ENCODE measurements at regions of chr6 and their contacts with region 1.

Region 1: GRCh38 chr6:2103644-2104523 is 141.5 kb downstream of the GMDS start:
- DNase-seq: peak; percentile 11
- ATAC-seq: peak; percentile 84
- H3K4me3 ChIP-seq: no peak overlapping the region
- H3K27ac ChIP-seq: no peak overlapping the region
- H3K4me1 ChIP-seq: no peaks in the 10 kb centered on the region
- H3K27me3 ChIP-seq: no peaks in the 10 kb centered on the region
- CTCF ChIP-seq: peak; percentile 43 to 76 (median 56); a peak in 5 of 6 replicates
- EP300 ChIP-seq: no peak
- POLR2A ChIP-seq: no peak
- RAD21 ChIP-seq: peak; percentile 94

Region 2: DNA sequence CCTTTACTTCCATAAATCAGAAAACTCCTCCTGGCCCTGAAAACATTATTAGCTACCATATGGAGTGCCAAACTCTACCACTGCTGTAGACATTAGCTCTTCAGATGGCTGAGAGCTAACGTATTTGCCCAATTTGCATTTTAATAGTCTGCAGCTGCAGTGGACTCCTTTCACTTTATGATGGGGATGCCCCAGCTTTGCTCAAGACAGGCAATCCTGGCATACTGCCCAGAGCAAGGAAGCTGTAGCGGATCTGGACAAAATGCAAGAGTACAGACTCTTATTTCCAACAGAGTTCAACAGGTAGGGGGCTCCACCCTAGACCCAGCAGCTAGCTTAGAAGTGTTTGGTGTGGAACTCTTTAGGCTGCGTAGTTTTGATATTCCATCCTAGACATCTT is 247.5 kb before region 1 on chr6:
- CTCF ChIA-PET with region 1: interaction called, 3 read pairs
- POLR2A ChIA-PET with region 1: no interaction called
- RAD21 ChIA-PET with region 1: interaction called, 4 read pairs
- SMC1A ChIA-PET with region 1: interaction called, 9 read pairs
- in situ Hi-C with region 1: no loop called
- intact Hi-C with region 1: loop called (anchors 10 kb)
- DNase-seq: peak; percentile 60
- ATAC-seq: peak; percentile 93
- H3K4me3 ChIP-seq: no peak overlapping the region
- H3K27ac ChIP-seq: no peak overlapping the region
- H3K4me1 ChIP-seq: peaks cover 18% of the 10 kb centered on the region
- H3K27me3 ChIP-seq: no peaks in the 10 kb centered on the region
- CTCF ChIP-seq: peak in 1 of 3 experiments; percentile 24; a peak in 2 of 6 replicates
- EP300 ChIP-seq: no peak
- POLR2A ChIP-seq: no peak
- RAD21 ChIP-seq: peak; percentile 31; the same call in 1 of the 2 replicates

Region 3: GRCh38 chr6:2158596-2159271 is 54.9 kb after region 1 on chr6:
- CTCF ChIA-PET with region 1: no interaction called
- POLR2A ChIA-PET with region 1: no interaction called
- RAD21 ChIA-PET with region 1: no interaction called
- SMC1A ChIA-PET with region 1: no interaction called
- in situ Hi-C with region 1: no loop called
- intact Hi-C with region 1: no loop called
- DNase-seq: no peak
- ATAC-seq: 0 out of 3 replicates have a peak, but pooled peaks have one; percentile 14
- H3K4me3 ChIP-seq: no peak overlapping the region
- H3K27ac ChIP-seq: no peak overlapping the region
- H3K4me1 ChIP-seq: peaks cover 32% of the 10 kb centered on the region
- H3K27me3 ChIP-seq: no peaks in the 10 kb centered on the region
- CTCF ChIP-seq: peak in 2 of 3 experiments; percentile 12 to 32; a peak in 3 of 6 replicates
- EP300 ChIP-seq: no peak
- POLR2A ChIP-seq: no peak
- RAD21 ChIP-seq: no peak

Region 4: GRCh38 chr6:2221726-2222274 is 117.9 kb after region 1 on chr6:
- CTCF ChIA-PET with region 1: no interaction called
- POLR2A ChIA-PET with region 1: no interaction called
- RAD21 ChIA-PET with region 1: no interaction called
- SMC1A ChIA-PET with region 1: no interaction called
- in situ Hi-C with region 1: no loop called
- intact Hi-C with region 1: no loop called
- DNase-seq: no peak
- ATAC-seq: peak; percentile 89
- H3K4me3 ChIP-seq: peak overlapping the region; percentile 77
- H3K27ac ChIP-seq: peak overlapping the region; percentile 97
- H3K4me1 ChIP-seq: peaks cover 14% of the 10 kb centered on the region
- H3K27me3 ChIP-seq: no peaks in the 10 kb centered on the region
- CTCF ChIP-seq: no peak
- EP300 ChIP-seq: no peak
- POLR2A ChIP-seq: no peak
- RAD21 ChIP-seq: no peak

Region 5: GRCh38 chr6:2353412-2354137 is 249.7 kb after region 1 on chr6:
- CTCF ChIA-PET with region 1: interaction called, 33 read pairs
- POLR2A ChIA-PET with region 1: no interaction called
- RAD21 ChIA-PET with region 1: interaction called, 8 read pairs
- SMC1A ChIA-PET with region 1: interaction called, 9 read pairs
- in situ Hi-C with region 1: loop called (anchors 10 kb)
- intact Hi-C with region 1: loop called (anchors 5 kb)
- DNase-seq: peak; percentile 8
- ATAC-seq: peak; percentile 73
- H3K4me3 ChIP-seq: no peak overlapping the region
- H3K27ac ChIP-seq: no peak overlapping the region
- H3K4me1 ChIP-seq: no peaks in the 10 kb centered on the region
- H3K27me3 ChIP-seq: no peaks in the 10 kb centered on the region
- CTCF ChIP-seq: peak; percentile 70 to 83 (median 78); a peak in 5 of 6 replicates
- EP300 ChIP-seq: no peak
- POLR2A ChIP-seq: no peak
- RAD21 ChIP-seq: peak; percentile 89

Region 6: DNA sequence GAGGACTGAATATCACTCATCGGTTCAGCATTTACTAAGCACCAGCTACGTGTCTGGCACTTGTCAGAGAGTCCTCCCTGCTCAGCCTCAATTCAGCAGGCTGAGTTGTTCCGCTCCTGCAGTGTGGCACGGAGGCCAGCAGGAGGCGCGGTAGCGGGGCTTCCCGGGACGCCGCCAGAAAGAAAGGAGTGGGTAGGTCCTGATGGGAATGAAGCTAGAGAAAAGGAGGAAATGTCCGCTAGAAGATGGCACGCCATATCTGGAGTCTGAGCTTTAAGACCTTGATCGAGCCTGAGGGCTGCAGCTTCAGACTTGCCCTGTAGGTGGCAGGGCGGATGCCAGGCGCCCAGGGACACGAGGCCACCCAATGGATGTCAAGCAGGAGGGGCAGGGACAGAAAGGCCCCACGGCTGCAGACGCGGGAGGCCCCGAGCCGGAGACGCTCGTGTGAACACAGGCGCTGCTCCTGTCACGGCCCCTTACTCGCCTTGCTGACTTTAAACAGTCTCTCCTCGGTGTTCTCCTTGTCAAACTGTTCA is 848.7 kb after region 1 on chr6:
- CTCF ChIA-PET with region 1: no interaction called
- POLR2A ChIA-PET with region 1: no interaction called
- RAD21 ChIA-PET with region 1: no interaction called
- SMC1A ChIA-PET with region 1: no interaction called
- in situ Hi-C with region 1: no loop called
- intact Hi-C with region 1: no loop called
- DNase-seq: no peak
- ATAC-seq: peak; percentile 99
- H3K4me3 ChIP-seq: no peak overlapping the region
- H3K27ac ChIP-seq: no peak overlapping the region
- H3K4me1 ChIP-seq: no peaks in the 10 kb centered on the region
- H3K27me3 ChIP-seq: peaks cover 4 to 6% of the 10 kb centered on the region in 2 experiments
- CTCF ChIP-seq: peak; percentile 52 to 83 (median 80)
- EP300 ChIP-seq: no peak
- POLR2A ChIP-seq: no peak
- RAD21 ChIP-seq: no peak

Measured in GM12878 (cell line).